K562 (cell line): ENCODE measurements at regions of chr5 and their contacts with region 1.

Region 1: DNA sequence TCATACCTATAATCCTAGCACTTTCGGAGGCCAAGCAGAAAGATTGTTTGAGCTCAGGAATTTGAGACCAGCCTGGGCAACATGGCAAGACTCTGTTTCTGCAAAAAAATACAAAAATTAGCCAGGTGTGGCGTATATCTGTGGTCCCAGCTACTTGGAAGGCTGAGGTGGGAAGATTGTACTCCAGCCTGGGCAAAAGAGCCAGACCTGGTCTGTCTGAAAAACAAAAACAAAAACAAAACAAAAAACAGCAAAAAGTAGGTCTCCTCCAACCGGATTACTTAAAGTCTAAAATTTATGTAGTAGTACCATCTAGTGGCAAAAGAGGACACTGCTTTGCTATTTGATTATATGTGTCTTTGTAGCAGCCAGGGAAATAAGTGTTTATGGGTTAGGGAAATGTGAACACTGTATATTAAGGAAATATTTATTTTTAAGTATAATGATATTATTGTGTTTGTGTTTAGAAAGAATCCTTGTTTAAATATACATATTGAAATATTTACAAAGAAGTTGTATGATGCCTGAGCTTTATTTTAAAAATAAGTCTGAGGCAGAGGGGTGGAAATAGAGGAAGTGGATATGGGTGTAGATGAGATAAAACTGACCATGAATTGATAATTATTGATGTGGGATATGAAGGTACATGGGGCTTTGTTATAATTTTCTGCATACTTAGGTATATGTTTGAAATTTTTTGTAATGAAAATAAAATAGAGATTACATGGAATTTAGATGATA is 20.0 kb downstream of the APC start:
- DNase-seq: peak in 3 of 4 experiments; percentile 8 to 68 (median 31)
- ATAC-seq: peak; percentile 96
- H3K4me3 ChIP-seq: no peak overlapping the region
- H3K27ac ChIP-seq: no peak overlapping the region
- H3K4me1 ChIP-seq: no peaks in the 10 kb centered on the region
- H3K27me3 ChIP-seq: no peaks in the 10 kb centered on the region
- CTCF ChIP-seq: peak; percentile 60 to 84 (median 63)
- EP300 ChIP-seq: no peak
- POLR2A ChIP-seq: no peak
- RAD21 ChIP-seq: peak; percentile 95 to 97

Region 2: DNA sequence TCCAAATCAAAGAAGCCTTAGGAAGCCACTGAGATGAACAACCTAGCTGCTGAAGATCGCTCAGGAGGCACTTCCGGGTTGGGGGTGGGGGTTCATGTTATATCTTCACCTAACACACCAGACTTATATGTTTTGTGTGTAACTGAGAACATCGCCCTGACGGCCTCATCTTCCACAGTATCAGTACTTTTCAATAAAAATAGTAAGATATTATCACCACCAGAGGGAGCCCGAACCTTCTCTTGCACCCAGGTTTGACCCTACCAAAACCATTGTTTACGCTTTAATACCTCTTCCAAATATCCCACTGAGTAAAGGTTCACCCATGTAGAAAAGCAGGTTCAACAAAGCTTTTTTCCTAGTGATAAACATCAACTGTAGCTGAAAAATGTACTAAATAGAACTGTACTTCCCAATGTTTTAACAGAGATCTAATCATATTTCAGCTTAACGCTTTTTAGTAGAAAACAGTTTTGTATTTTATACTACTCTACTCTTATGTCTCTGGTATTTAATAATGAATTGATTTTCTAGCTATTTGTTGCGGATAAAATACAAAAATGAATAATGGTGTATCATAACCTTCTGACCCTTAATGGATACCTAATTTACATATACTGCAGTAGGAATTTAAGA is 582.6 kb before region 1 on chr5:
- CTCF ChIA-PET with region 1: interaction called, 6 read pairs
- POLR2A ChIA-PET with region 1: no interaction called
- in situ Hi-C with region 1: no loop called
- intact Hi-C with region 1: loop called (anchors 5 kb)
- DNase-seq: peak; percentile 60 to 74 (median 67)
- ATAC-seq: peak; percentile 92
- H3K4me3 ChIP-seq: no peak overlapping the region
- H3K27ac ChIP-seq: no peak overlapping the region
- H3K4me1 ChIP-seq: no peaks in the 10 kb centered on the region
- H3K27me3 ChIP-seq: no peaks in the 10 kb centered on the region
- CTCF ChIP-seq: peak; percentile 55 to 80 (median 66); a peak in 5 of 6 replicates
- EP300 ChIP-seq: no peak
- POLR2A ChIP-seq: no peak
- RAD21 ChIP-seq: peak; percentile 73 to 84

Region 3: GRCh38 chr5:112210430-112211005 is 547.1 kb before region 1 on chr5:
- CTCF ChIA-PET with region 1: no interaction called
- POLR2A ChIA-PET with region 1: no interaction called
- in situ Hi-C with region 1: loop called (anchors 25 kb)
- intact Hi-C with region 1: no loop called
- DNase-seq: peak in 3 of 4 experiments; percentile 11 to 66 (median 20)
- ATAC-seq: peak; percentile 80
- H3K4me3 ChIP-seq: no peak overlapping the region
- H3K27ac ChIP-seq: no peak overlapping the region
- H3K4me1 ChIP-seq: peaks cover 0 to 6% of the 10 kb centered on the region in 2 experiments; a peak in 3 of 5 replicates
- H3K27me3 ChIP-seq: no peaks in the 10 kb centered on the region
- CTCF ChIP-seq: peak; percentile 46 to 74 (median 64); a peak in 5 of 6 replicates
- EP300 ChIP-seq: no peak
- POLR2A ChIP-seq: no peak
- RAD21 ChIP-seq: peak; percentile 57 to 67

Region 4: DNA sequence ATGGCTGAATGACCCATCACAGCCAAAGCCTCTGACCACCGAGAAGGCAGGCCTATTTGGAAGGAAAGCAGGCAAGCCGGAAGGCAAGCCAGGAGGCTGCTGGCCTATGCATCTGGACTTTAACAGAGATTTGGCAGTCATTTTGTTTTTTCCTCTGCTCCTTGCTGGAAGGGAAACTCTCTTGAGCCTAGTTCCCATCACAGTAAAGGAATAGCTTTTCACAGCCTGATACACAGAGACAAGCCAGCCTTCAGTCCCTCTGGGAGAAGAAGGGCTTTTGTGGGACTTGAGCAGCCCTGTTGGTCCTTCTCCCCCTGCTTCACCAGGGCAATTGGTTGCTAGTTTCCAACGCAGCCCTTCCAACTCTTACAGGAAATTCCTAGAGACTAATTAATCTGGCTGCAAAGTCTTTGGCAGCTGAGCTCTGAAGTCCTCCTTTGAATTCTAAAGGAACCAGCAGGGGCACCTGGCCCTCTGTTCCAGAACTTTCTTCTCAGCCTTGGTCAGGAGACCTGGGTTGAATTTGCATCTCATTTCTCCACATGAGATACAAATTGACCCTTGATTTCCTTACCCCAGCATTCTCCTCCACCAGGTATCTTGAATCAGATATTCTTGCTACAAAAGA is 181.2 kb before region 1 on chr5:
- CTCF ChIA-PET with region 1: no interaction called
- POLR2A ChIA-PET with region 1: no interaction called
- in situ Hi-C with region 1: no loop called
- intact Hi-C with region 1: no loop called
- DNase-seq: no peak
- ATAC-seq: no peak
- H3K4me3 ChIP-seq: no peak overlapping the region
- H3K27ac ChIP-seq: no peak overlapping the region
- H3K4me1 ChIP-seq: peaks cover 0 to under 1% of the 10 kb centered on the region in 2 experiments; a peak in 3 of 5 replicates
- H3K27me3 ChIP-seq: peaks cover 5 to 26% of the 10 kb centered on the region in 2 experiments; a peak in 4 of 5 replicates
- CTCF ChIP-seq: no peak
- EP300 ChIP-seq: no peak
- POLR2A ChIP-seq: no peak
- RAD21 ChIP-seq: no peak

Region 5: DNA sequence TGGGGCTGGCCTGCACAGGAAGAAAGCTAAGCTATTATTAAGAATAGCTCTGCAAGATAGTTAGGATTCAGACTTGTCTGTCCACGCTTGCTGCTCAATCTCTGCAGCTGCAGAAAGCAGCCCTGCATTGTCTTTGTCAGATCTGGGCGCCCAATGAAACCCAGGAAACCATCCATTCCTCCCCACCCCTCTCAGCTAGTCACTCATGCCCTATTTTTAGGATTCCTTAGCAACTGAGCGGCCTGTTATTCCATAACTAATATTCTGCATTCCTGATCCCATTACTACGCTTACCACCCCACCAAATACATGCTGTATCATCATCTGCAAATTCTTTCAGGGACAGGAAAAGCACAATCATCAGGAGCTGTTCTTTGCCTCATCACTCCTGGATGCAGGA is 72.9 kb before region 1 on chr5:
- CTCF ChIA-PET with region 1: no interaction called
- POLR2A ChIA-PET with region 1: interaction called, 11 read pairs
- in situ Hi-C with region 1: loop called (anchors 5 kb)
- intact Hi-C with region 1: no loop called
- DNase-seq: no peak
- ATAC-seq: no peak
- H3K4me3 ChIP-seq: no peak overlapping the region
- H3K27ac ChIP-seq: no peak overlapping the region
- H3K4me1 ChIP-seq: peaks cover 0 to 10% of the 10 kb centered on the region in 2 experiments; a peak in 3 of 5 replicates
- H3K27me3 ChIP-seq: peaks cover 0 to 2% of the 10 kb centered on the region in 2 experiments; a peak in 1 of 5 replicates
- CTCF ChIP-seq: no peak
- EP300 ChIP-seq: no peak
- POLR2A ChIP-seq: no peak
- RAD21 ChIP-seq: no peak

Region 6: GRCh38 chr5:112848116-112848811 is 90.6 kb after region 1 on chr5:
- CTCF ChIA-PET with region 1: no interaction called
- POLR2A ChIA-PET with region 1: interaction called, 3 read pairs
- in situ Hi-C with region 1: no loop called
- intact Hi-C with region 1: loop called (anchors 5 kb)
- DNase-seq: peak; percentile 33 to 80 (median 54)
- ATAC-seq: peak; percentile 99
- H3K4me3 ChIP-seq: no peak overlapping the region
- H3K27ac ChIP-seq: peak overlapping the region; percentile 4; the same call in 1 of the 3 replicates
- H3K4me1 ChIP-seq: peaks cover 0 to 4% of the 10 kb centered on the region in 2 experiments; a peak in 1 of 5 replicates
- H3K27me3 ChIP-seq: no peaks in the 10 kb centered on the region
- CTCF ChIP-seq: peak; percentile 55 to 78 (median 72); a peak in 5 of 6 replicates
- EP300 ChIP-seq: no peak
- POLR2A ChIP-seq: no peak
- RAD21 ChIP-seq: peak in 1 of 2 experiments; percentile 68; a peak in 2 of 4 replicates